GM12878 (cell line): ENCODE measurements at regions of chr17 and their contacts with region 1.

Region 1: GRCh38 chr17:21705021-21705601 is 12.8 kb downstream of the KCNJ18 start:
- DNase-seq: no peak
- ATAC-seq: no peak
- H3K4me3 ChIP-seq: no peak overlapping the region
- H3K27ac ChIP-seq: no peak overlapping the region
- H3K4me1 ChIP-seq: no peaks in the 10 kb centered on the region
- H3K27me3 ChIP-seq: no peaks in the 10 kb centered on the region
- CTCF ChIP-seq: no peak
- EP300 ChIP-seq: no peak
- POLR2A ChIP-seq: no peak
- RAD21 ChIP-seq: no peak

Region 2: DNA sequence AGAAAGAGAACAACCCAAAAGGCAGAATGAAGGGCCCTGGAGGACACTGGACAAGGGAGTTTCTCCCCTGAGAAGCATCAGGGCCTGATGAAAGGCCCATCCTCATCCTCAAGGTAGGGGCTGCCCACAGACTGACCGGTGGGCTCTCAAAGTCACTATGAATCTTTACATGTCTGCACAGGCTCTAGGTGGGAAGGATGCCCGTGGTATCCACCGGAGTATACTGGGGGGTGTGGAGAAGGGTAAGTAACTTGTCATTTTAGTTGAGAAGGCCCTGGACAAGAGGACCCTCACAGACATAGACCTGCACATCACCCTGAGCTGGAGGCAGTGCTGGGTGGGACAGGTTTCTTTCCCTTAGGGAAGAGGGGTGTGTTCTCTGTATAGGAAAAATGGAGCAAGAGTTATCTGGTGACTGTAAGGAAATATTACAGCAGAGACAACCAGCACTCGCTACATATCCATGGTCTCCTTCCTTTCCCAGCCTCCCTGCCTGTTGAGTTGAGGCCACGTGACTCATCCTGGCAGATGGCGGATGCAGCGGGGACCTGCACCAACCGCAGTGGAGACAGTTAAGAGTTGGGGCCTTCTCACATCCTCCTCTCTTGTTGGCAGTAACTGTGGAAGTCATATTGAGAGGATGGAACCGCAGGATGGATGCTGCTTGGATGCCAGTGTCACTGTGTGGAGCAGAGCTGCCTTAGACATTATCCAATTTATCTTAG is 374.5 kb before region 1 on chr17:
- CTCF ChIA-PET with region 1: no interaction called
- POLR2A ChIA-PET with region 1: no interaction called
- RAD21 ChIA-PET with region 1: no interaction called
- SMC1A ChIA-PET with region 1: no interaction called
- in situ Hi-C with region 1: no loop called
- intact Hi-C with region 1: no loop called
- DNase-seq: no peak
- ATAC-seq: no peak
- H3K4me3 ChIP-seq: no peak overlapping the region
- H3K27ac ChIP-seq: no peak overlapping the region
- H3K4me1 ChIP-seq: no peaks in the 10 kb centered on the region
- H3K27me3 ChIP-seq: no peaks in the 10 kb centered on the region
- CTCF ChIP-seq: no peak
- EP300 ChIP-seq: no peak
- POLR2A ChIP-seq: no peak
- RAD21 ChIP-seq: no peak

Region 3: GRCh38 chr17:21419299-21420239 is 285.5 kb before region 1 on chr17:
- CTCF ChIA-PET with region 1: no interaction called
- POLR2A ChIA-PET with region 1: no interaction called
- RAD21 ChIA-PET with region 1: no interaction called
- SMC1A ChIA-PET with region 1: no interaction called
- in situ Hi-C with region 1: loop called (anchors 5 kb)
- intact Hi-C with region 1: no loop called
- DNase-seq: no peak
- ATAC-seq: peak; percentile 46
- H3K4me3 ChIP-seq: no peak overlapping the region
- H3K27ac ChIP-seq: no peak overlapping the region
- H3K4me1 ChIP-seq: no peaks in the 10 kb centered on the region
- H3K27me3 ChIP-seq: no peaks in the 10 kb centered on the region; a peak in 1 of 4 replicates
- CTCF ChIP-seq: no peak
- EP300 ChIP-seq: no peak
- POLR2A ChIP-seq: no peak
- RAD21 ChIP-seq: no peak